Activated CD4-positive, alpha-beta memory T cell treated with anti-CD3 and anti-CD28 coated beads, Interleukin-2, amount 10 ng/mL, durations not matched to agents 7 days and 5 days (primary cell): ENCODE measurements at regions of chr15 and their contacts with region 1.

Region 1: GRCh38 chr15:38610748-38611147 is 46.1 kb upstream of the RASGRP1 start:
- DNase-seq: peak; percentile 65
- H3K4me3 Mint-ChIP-seq: peak overlapping the region; percentile 61
- H3K27ac Mint-ChIP-seq: peak overlapping the region; percentile 99
- H3K4me1 Mint-ChIP-seq: peaks cover 71% of the 10 kb centered on the region
- H3K27me3 Mint-ChIP-seq: no peaks in the 10 kb centered on the region

Region 2: GRCh38 chr15:38576837-38577236 is 33.9 kb before region 1 on chr15:
- CTCF ChIA-PET with region 1: no interaction called
- POLR2A ChIA-PET with region 1: no interaction called
- DNase-seq: no peak
- H3K4me3 Mint-ChIP-seq: no peak overlapping the region
- H3K27ac Mint-ChIP-seq: no peak overlapping the region
- H3K4me1 Mint-ChIP-seq: peaks cover 20% of the 10 kb centered on the region
- H3K27me3 Mint-ChIP-seq: no peaks in the 10 kb centered on the region

Region 3: DNA sequence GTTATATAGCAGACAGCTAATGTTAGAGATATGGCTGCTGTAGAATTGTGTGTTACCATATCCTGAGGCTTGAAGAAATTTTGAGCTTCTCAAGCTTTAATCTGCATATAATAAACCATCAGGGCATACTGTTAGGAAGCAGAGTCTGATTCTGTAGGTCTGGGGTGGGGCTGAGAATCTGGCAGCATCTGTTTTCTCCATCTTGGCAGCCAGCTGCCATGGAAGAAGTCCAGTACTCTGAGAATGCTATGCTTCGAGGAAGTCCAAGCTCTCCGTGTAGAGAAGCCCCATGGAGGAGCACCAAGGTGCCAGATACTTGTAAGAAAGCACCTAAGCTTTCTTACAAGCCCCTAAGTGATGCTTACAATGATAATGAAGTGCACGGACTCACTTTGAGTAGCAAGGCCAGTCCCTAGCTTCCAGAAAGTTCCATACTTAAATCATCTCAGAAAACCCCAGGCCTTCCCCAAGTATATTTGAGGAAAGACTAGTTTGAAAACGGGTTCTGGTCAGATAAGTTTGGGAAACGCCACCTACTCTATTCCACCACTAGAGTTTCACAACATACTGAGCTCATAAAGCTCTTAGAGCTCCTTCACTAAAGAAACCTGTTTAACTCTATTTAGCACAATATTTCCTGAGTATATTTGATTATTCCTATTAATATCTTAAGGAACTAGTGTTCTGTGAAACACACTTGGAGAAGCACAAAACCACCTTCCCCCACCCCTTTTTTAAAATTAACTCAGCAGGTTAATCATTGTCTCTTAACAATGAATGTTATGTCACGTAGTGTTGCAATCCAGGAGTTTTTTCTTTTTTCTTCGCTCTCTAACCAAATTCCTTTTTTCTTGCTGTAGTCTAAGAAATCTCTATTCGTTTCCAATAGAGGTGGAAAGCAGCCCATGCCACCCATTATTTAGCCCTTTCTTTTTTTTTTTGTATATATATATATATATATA is 13.8 kb after region 1 on chr15:
- CTCF ChIA-PET with region 1: interaction called, 9 read pairs
- POLR2A ChIA-PET with region 1: interaction called, 19 read pairs
- DNase-seq: no peak
- H3K4me3 Mint-ChIP-seq: no peak overlapping the region
- H3K27ac Mint-ChIP-seq: no peak overlapping the region
- H3K4me1 Mint-ChIP-seq: peaks cover 25% of the 10 kb centered on the region
- H3K27me3 Mint-ChIP-seq: no peaks in the 10 kb centered on the region

Region 4: GRCh38 chr15:38631126-38632075 is 20.7 kb after region 1 on chr15:
- CTCF ChIA-PET with region 1: interaction called, 9 read pairs
- POLR2A ChIA-PET with region 1: interaction called, 19 read pairs
- DNase-seq: no peak
- H3K4me3 Mint-ChIP-seq: no peak overlapping the region
- H3K27ac Mint-ChIP-seq: peak overlapping the region; percentile 61
- H3K4me1 Mint-ChIP-seq: peaks cover 25% of the 10 kb centered on the region
- H3K27me3 Mint-ChIP-seq: no peaks in the 10 kb centered on the region

Region 5: GRCh38 chr15:38671675-38672254 is 61.0 kb after region 1 on chr15:
- CTCF ChIA-PET with region 1: interaction called, 8 read pairs
- POLR2A ChIA-PET with region 1: interaction called, 73 read pairs
- DNase-seq: peak; percentile 52
- H3K4me3 Mint-ChIP-seq: peak overlapping the region; percentile 56
- H3K27ac Mint-ChIP-seq: peak overlapping the region; percentile 97
- H3K4me1 Mint-ChIP-seq: peaks cover 81% of the 10 kb centered on the region
- H3K27me3 Mint-ChIP-seq: no peaks in the 10 kb centered on the region